GM13977 (cell line): ENCODE measurements at regions of chr7 and their contacts with region 1.

Region 1: DNA sequence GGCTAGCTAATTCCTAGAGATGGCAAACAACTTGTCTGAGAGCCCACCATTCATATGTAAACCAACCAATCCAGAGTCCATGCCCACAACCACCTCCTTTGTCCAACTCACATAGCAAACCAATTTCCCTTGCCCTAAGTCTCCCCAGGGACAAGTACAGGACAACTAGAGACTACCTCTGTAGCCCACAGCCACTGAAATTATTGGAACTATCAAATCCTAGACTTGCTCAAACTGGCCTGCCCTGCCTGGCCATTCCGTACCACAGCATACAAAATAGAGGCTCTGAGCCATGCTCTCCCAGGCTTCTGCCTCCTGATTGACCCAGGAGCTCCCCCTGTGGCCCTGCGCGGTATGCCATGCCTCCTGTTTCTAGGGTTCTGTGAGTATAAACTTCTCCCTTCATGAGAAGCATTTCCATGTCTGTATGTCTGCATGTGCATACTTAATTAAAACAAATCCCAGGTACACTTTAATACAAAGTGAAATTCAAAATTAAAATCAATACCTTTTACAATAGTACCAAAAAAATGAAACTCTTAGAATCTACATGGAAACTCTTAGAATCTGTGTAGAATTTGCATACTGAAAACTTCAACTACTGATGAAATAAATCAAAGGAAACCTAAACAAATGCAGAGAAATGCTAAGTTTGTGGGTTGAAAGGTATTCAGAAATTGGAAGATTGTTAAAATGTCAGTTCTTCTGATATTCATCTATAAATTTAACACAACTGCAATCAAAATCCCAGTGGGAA is 4.0 kb upstream of the HECW1 start:
- DNase-seq: peak; percentile 68
- CTCF ChIP-seq: peak; percentile 87

Region 2: DNA sequence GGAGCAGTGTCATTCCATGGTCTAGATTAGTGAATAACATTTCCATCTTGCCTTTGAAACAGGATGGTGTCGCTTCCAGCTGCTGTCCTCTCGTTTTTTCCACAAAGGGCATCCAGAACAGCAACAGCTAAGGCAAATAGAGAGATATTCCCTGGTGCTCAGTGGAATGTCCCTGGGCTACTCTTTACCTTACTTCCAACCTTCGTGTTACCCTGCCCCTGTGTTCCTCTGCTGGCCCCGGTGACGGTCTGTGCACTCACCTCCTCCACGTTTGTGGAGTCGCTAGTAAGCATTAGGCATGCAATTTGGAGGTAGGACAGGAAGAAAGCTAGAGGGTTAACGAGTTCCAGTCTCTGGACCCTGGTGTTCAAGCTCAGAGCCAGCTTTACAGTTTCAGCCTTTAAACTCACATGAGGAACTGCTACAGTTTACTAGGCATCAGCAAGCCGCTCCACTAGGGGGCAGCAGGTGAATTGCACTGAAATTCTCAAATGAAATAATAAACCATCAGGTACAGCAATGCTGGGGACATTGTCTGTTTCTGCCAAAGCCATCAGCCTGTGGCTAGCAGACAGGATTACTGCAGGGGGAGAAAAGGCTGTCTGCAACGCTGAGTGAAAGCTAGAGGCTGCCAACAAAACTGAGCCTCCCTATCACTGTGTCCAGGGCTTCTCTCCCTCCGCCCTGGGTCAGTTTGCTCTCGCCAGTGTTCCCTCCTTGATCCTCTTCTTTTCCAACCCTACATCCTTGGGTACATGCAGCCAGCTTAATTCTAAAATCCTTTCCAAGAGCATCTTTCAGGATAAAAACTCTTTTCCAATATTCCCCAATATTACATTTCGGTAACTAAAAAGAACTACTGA is 167.2 kb before region 1 on chr7:
- in situ Hi-C with region 1: loop called (anchors 10 kb)
- DNase-seq: peak; percentile 51
- CTCF ChIP-seq: peak; percentile 92

Region 3: GRCh38 chr7:43394441-43395130 is 286.2 kb after region 1 on chr7:
- in situ Hi-C with region 1: no loop called
- DNase-seq: no peak
- CTCF ChIP-seq: no peak

Region 4: DNA sequence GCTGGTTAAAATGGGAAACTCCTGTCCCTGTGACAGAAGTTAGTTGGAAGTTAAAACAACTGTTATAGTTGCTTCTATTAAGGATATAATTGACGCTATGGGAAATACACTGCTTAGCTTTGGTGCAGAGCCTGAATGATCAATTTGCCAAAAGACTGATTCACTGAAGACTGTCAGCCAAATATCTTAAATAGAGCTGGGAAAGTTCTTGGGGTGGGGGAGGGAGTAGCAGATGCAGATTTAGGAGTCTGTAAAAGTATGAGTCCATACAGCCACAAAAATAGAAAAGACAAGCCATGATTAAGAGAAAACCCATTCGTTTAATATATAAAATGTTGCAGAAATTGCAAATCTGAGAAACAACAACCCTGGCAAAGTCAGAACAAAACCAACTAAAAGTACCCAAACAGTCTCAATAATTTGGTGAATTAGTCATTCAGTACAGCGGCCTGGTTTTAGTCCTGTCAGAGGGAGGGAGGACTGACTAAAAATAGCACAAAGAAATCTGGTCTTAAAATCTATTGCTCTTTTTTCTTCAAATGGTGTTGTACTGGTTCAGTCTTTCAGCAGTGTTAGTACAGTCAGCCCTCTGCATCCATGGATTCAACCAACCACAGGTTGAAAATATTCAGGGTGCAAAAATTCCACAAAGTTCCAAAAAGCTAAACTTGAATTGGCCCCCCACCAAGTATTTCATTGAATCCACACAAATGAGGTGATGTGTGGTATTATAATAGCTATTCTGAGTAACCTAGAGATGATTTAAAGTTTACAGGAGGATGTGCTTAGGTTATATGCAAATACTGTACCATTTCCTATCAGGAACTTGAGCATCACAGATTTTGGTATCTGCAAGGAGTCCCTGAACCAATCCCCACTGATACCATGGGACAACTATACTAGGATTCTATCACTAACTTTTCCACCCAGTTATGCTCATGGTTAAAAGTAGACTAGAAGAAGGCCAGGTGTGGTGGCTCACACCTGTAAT is 504.5 kb after region 1 on chr7:
- in situ Hi-C with region 1: no loop called
- DNase-seq: peak; percentile 67
- CTCF ChIP-seq: no peak